Endothelial cell of umbilical vein (primary cell): ENCODE measurements at regions of chr15 and their contacts with region 1.

Region 1: GRCh38 chr15:90214553-90215196 is 13.5 kb downstream of the SEMA4B start:
- DNase-seq: no peak
- H3K4me3 ChIP-seq: no peak overlapping the region
- H3K27ac ChIP-seq: no peak overlapping the region
- H3K4me1 ChIP-seq: peaks cover 12% of the 10 kb centered on the region
- H3K27me3 ChIP-seq: no peaks in the 10 kb centered on the region
- CTCF ChIP-seq: peak in 1 of 2 donors; percentile 36
- POLR2A ChIP-seq: no peak

Region 2: DNA sequence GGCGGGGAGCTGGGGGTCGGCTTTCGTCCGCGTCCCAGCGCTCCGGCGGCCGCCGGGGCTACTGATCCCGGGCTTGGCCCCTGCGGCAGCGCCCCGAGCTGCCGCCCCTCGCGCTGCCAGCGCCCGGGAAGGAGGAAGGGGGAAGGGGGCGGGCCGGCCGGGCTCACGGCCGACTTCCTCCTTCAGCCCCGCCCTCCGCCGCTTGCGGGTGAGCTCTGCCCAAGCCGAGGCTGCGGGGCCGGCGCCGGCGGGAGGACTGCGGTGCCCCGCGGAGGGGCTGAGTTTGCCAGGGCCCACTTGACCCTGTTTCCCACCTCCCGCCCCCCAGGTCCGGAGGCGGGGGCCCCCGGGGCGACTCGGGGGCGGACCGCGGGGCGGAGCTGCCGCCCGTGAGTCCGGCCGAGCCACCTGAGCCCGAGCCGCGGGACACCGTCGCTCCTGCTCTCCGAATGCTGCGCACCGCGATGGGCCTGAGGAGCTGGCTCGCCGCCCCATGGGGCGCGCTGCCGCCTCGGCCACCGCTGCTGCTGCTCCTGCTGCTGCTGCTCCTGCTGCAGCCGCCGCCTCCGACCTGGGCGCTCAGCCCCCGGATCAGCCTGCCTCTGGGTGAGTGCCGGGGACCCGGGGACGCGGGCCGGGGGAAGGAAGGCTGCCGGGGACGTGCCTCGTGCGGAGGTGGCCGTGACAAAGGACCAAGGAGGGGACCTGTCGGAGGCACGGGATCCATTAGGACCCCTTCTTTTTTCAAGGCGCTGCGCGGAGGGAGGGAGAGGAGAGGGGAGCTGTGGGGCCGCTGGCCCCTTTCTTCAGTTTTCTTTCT is 13.3 kb before region 1 on chr15 and contains the start of gene SEMA4B:
- CTCF ChIA-PET with region 1: interaction called, 34 read pairs
- POLR2A ChIA-PET with region 1: interaction called, 4 read pairs
- dilution Hi-C with region 1: no loop called
- intact Hi-C with region 1: no loop called
- DNase-seq: peak; percentile 53
- H3K4me3 ChIP-seq: peak within 1 kb of the TSS; percentile 67 to 92 (median 77)
- H3K27ac ChIP-seq: no peak within 1 kb of the TSS
- H3K4me1 ChIP-seq: peaks cover 6% of the 10 kb centered on the region
- H3K27me3 ChIP-seq: no peaks in the 10 kb centered on the region
- CTCF ChIP-seq: no peak
- POLR2A ChIP-seq: peak; percentile 90
- total RNA-seq, gene SEMA4B: 7.1 and 7.8 TPM in 2 replicates

Region 3: GRCh38 chr15:90286678-90287077 is 72.0 kb after region 1 on chr15:
- CTCF ChIA-PET with region 1: interaction called, 11 read pairs
- POLR2A ChIA-PET with region 1: interaction called, 8 read pairs
- dilution Hi-C with region 1: no loop called
- intact Hi-C with region 1: no loop called
- DNase-seq: peak; percentile 62
- H3K4me3 ChIP-seq: no peak overlapping the region
- H3K27ac ChIP-seq: no peak overlapping the region
- H3K4me1 ChIP-seq: no peaks in the 10 kb centered on the region
- H3K27me3 ChIP-seq: no peaks in the 10 kb centered on the region
- CTCF ChIP-seq: peak; percentile 38 to 39
- POLR2A ChIP-seq: no peak